Activated CD4-positive, alpha-beta T cell treated with anti-CD3 and anti-CD28 coated beads for 36 hours (primary cell): ENCODE measurements at regions of chr19 and their contacts with region 1.

Region 1: DNA sequence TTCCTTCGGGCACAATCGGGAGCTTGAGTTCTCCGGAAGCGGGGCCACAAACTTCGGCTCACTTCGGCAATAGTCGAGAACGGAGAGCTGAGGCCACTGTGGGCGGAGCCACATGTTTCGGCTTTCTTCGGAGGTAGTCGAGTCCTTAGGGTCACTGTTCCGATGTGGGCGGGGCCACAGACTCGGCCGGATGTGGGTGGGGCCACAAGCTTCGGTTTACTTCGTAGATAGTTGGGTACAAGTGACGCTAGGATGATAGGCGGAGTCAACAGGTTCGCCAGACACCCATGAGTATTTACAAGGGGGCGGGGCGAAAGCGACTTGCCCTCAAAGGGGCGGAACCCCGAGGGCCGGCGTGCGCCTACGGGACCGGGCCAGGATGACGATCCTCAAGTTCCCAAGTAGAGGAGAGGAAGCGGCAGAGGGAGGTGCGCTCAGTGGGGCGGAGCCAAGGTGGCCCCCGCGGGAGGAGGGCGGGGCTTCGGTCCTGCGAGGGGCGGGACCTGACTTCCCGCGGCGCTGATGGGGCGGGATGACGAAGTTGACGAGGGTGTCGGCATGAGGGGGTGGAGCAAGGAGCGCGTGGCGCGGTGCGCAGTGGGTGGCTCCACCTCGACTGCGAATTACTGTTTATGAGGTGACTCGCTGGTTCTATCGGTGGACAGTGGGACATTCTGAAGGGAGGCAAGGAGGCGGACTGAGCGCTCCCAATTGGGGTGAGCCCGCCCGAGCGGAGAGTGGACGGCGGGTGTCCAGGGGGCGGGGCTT is 539 bp upstream of the MBOAT7 start:
- DNase-seq: peak; percentile 100
- ATAC-seq: peak; percentile 69
- H3K4me3 Mint-ChIP-seq: peak overlapping the region; percentile 76
- H3K27ac Mint-ChIP-seq: peak overlapping the region; percentile 96
- H3K4me1 Mint-ChIP-seq: peaks cover 34% of the 10 kb centered on the region
- H3K27me3 Mint-ChIP-seq: no peaks in the 10 kb centered on the region

Region 2: GRCh38 chr19:54115109-54116063 is 74.5 kb before region 1 on chr19 and contains the starts of genes PRPF31 and TFPT:
- CTCF ChIA-PET with region 1: interaction called, 3 read pairs
- POLR2A ChIA-PET with region 1: interaction called, 10 read pairs
- intact Hi-C with region 1: loop called (anchors 1 kb)
- DNase-seq: peak; percentile 97
- ATAC-seq: peak; percentile 94
- H3K4me3 Mint-ChIP-seq: peak within 1 kb of the TSS; percentile 83
- H3K27ac Mint-ChIP-seq: peak within 1 kb of the TSS; percentile 96
- H3K4me1 Mint-ChIP-seq: peaks cover 25% of the 10 kb centered on the region
- H3K27me3 Mint-ChIP-seq: no peaks in the 10 kb centered on the region
- total RNA-seq, gene PRPF31: 85.5 to 115 TPM
- total RNA-seq, gene TFPT: 28.5 to 39.3 TPM

Region 3: DNA sequence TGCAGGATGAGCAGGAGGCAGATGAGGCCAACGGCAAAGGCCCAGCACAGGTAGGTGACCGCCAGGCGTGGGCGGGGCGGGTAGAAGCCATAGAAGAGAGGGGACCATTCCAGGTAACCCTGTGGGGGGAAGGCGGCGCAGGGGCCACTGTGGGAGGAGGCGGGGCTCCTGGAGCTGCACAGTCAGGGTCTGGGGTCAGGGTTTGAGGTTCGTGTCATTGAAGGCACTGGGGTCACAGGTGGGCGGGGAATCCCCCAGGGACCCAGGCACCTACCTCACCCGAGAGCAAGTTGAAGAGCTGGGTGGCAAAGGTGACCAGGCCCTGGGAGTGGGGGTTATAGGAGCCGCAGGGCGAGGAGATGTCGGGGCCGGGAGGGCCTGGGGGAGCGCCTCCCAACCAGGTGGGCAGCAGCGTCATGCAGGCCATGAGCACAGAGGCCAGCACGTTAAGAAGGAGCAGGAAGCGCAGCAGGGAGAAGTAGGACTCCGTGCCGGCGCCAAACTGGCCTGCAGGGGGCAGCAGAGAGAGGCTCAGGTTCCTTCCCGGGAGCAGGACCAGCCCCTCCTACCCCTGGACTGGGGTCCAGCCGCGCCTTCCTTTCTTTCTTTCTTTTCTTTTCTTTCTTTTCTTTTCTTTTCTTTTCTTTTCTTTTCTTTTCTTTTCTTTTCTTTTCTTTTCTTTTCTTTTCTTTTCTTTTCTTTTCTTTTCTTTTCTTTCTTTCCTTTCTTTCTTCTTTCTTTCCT is 21.6 kb before region 1 on chr19:
- CTCF ChIA-PET with region 1: interaction called, 14 read pairs
- POLR2A ChIA-PET with region 1: interaction called, 12 read pairs
- intact Hi-C with region 1: no loop called
- DNase-seq: peak; percentile 96
- ATAC-seq: peak; percentile 93
- H3K4me3 Mint-ChIP-seq: no peak overlapping the region
- H3K27ac Mint-ChIP-seq: no peak overlapping the region
- H3K4me1 Mint-ChIP-seq: peaks cover 19% of the 10 kb centered on the region
- H3K27me3 Mint-ChIP-seq: peaks cover 5% of the 10 kb centered on the region

Region 4: GRCh38 chr19:54209811-54210494 is 20.0 kb after region 1 on chr19:
- CTCF ChIA-PET with region 1: interaction called, 14 read pairs
- POLR2A ChIA-PET with region 1: interaction called, 32 read pairs
- intact Hi-C with region 1: loop called in 1 of 2 experiments (anchors 2 kb)
- DNase-seq: peak; percentile 48
- ATAC-seq: no peak
- H3K4me3 Mint-ChIP-seq: peak overlapping the region; percentile 4
- H3K27ac Mint-ChIP-seq: peak overlapping the region; percentile 59
- H3K4me1 Mint-ChIP-seq: peaks cover 64% of the 10 kb centered on the region
- H3K27me3 Mint-ChIP-seq: no peaks in the 10 kb centered on the region

Region 5: DNA sequence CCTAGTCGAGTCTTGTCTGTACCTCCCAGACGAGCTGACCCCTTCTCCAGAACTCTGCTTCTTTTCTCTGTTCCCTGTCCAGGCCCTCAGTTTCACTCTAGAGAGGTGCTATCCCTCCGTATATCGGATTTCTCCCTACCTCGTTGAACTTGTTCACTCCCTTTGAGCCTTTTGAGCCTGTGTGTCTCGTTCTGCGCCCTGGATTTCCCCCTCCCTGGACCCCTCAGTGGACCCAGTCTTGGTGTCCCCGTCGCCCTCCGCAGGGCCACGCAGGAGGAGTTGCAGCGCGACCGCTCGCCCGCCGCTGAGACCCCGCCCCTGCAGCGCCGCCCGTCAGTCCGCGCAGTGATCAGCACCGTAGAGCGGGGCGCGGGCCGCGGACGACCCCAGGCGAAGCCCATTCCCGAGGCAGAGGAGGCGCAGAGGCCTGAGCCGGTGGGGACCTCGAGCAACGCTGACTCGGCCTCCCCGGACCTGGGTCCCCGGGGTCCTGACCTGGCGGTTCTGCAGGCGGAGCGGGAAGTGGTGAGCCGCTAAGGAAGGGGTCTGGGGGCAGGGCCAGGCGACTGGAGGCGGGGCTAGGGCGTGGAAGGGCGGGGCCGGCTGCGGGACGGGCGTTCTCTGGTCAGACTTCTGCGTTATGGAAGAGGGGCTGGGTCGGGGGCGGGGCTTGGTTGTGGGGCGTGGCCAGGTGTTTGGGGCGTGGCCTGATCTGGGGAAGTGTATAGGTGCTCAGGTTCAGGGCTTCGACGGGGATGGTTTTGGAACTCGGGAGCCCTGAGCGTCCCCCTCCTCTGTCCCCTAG is 891.3 kb after region 1 on chr19:
- CTCF ChIA-PET with region 1: no interaction called
- POLR2A ChIA-PET with region 1: no interaction called
- intact Hi-C with region 1: loop called in 1 of 2 experiments (anchors 2 kb)
- DNase-seq: peak; percentile 95
- ATAC-seq: peak; percentile 71
- H3K4me3 Mint-ChIP-seq: peak overlapping the region; percentile 69
- H3K27ac Mint-ChIP-seq: peak overlapping the region; percentile 31
- H3K4me1 Mint-ChIP-seq: peaks cover 22% of the 10 kb centered on the region
- H3K27me3 Mint-ChIP-seq: peaks cover 56% of the 10 kb centered on the region

Region 6: GRCh38 chr19:55653758-55654539 is 1464.0 kb after region 1 on chr19:
- CTCF ChIA-PET with region 1: interaction called, 7 read pairs
- POLR2A ChIA-PET with region 1: no interaction called
- intact Hi-C with region 1: loop called in 1 of 2 experiments (anchors 2 kb)
- DNase-seq: peak; percentile 99
- ATAC-seq: peak; percentile 84
- H3K4me3 Mint-ChIP-seq: peak overlapping the region; percentile 86
- H3K27ac Mint-ChIP-seq: peak overlapping the region; percentile 98
- H3K4me1 Mint-ChIP-seq: peaks cover 37% of the 10 kb centered on the region
- H3K27me3 Mint-ChIP-seq: no peaks in the 10 kb centered on the region